B cell (primary cell): ENCODE measurements at regions of chr15 and their contacts with region 1.

Region 1: GRCh38 chr15:80058851-80059785 is at the start of gene ZFAND6:
- DNase-seq: peak; percentile 97
- ATAC-seq: peak; percentile 83
- H3K4me3 ChIP-seq: peak within 1 kb of the TSS; percentile 78 to 93 (median 85)
- H3K4me3 Mint-ChIP-seq: peak within 1 kb of the TSS; percentile 95
- H3K27ac ChIP-seq: peak within 1 kb of the TSS; percentile 87 to 96
- H3K27ac Mint-ChIP-seq: peak within 1 kb of the TSS; percentile 99
- H3K4me1 ChIP-seq: peaks cover 27 to 35% of the 10 kb centered on the region in 2 donors
- H3K4me1 Mint-ChIP-seq: peaks cover 52% of the 10 kb centered on the region
- H3K27me3 ChIP-seq: no peaks in the 10 kb centered on the region
- H3K27me3 Mint-ChIP-seq: no peaks in the 10 kb centered on the region
- CTCF ChIP-seq: peak; percentile 18
- total RNA-seq, gene ZFAND6: 133 and 144 TPM in 2 replicates

Region 2: DNA sequence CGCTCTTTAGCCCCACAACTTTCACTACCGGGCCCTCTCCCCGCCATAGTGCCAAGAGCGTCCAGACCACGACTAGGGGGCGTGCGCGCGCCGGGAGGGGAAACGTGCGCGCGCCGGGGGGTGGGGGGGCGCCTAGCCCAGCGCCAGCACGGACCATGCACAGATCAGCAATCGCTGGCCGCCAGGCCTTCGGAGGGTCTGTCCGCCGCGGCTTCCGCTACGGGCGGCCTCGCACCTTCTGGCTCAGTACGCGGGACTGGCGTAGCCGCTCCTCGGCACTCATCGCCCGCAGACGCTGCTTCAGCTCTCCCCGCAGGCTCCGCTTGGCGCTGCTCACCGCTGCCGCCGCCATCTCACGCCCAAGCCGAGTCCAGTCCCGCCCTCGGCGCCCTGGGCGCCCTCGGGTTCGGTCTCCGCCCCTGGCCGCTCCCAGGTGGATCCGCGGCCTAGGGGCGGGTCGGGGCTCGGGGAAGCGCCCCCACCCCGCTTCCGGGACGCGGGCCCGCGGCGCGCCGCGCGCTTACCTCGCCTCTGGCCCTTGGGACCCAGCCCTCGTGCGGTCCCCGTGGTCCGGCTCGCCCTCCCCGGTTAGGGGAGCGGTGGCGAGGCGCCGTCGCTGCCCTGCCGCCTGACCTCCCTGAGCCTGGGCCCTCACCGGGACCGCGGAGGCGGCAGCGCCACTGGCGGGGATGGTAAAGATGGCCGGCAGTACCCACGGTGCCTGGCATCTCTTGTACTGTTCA is 162.3 kb before region 1 on chr15 and contains the start of gene MTHFS:
- CTCF ChIA-PET with region 1: no interaction called
- POLR2A ChIA-PET with region 1: no interaction called
- intact Hi-C with region 1: loop called (anchors 1 kb)
- DNase-seq: peak; percentile 93
- ATAC-seq: peak; percentile 92
- H3K4me3 ChIP-seq: peak within 1 kb of the TSS; percentile 71 to 85 (median 79)
- H3K4me3 Mint-ChIP-seq: peak within 1 kb of the TSS; percentile 97
- H3K27ac ChIP-seq: peak within 1 kb of the TSS; percentile 90 to 98
- H3K27ac Mint-ChIP-seq: peak within 1 kb of the TSS; percentile 98
- H3K4me1 ChIP-seq: peaks cover 23 to 32% of the 10 kb centered on the region in 2 donors
- H3K4me1 Mint-ChIP-seq: peaks cover 40% of the 10 kb centered on the region
- H3K27me3 ChIP-seq: no peaks in the 10 kb centered on the region
- H3K27me3 Mint-ChIP-seq: no peaks in the 10 kb centered on the region
- CTCF ChIP-seq: peak; percentile 68
- total RNA-seq, gene MTHFS: 20.1 and 24.4 TPM in 2 replicates

Region 3: GRCh38 chr15:79970624-79971434 is 88.3 kb before region 1 on chr15 and contains the start of gene BCL2A1:
- CTCF ChIA-PET with region 1: interaction called, 4 read pairs
- POLR2A ChIA-PET with region 1: no interaction called
- intact Hi-C with region 1: loop called (anchors 2 kb)
- DNase-seq: peak; percentile 92
- ATAC-seq: peak; percentile 85
- H3K4me3 ChIP-seq: peak within 1 kb of the TSS; percentile 33 to 88 (median 57)
- H3K4me3 Mint-ChIP-seq: peak within 1 kb of the TSS; percentile 91
- H3K27ac ChIP-seq: peak within 1 kb of the TSS; percentile 75 to 79
- H3K27ac Mint-ChIP-seq: peak within 1 kb of the TSS; percentile 90
- H3K4me1 ChIP-seq: peaks cover 53 to 64% of the 10 kb centered on the region in 2 donors
- H3K4me1 Mint-ChIP-seq: peaks cover 60% of the 10 kb centered on the region
- H3K27me3 ChIP-seq: no peaks in the 10 kb centered on the region
- H3K27me3 Mint-ChIP-seq: no peaks in the 10 kb centered on the region
- CTCF ChIP-seq: no peak
- total RNA-seq, gene BCL2A1: 32.9 and 33.8 TPM in 2 replicates

Region 4: GRCh38 chr15:80070840-80071239 is 11.7 kb after region 1 on chr15:
- CTCF ChIA-PET with region 1: interaction called, 5 read pairs
- POLR2A ChIA-PET with region 1: no interaction called
- intact Hi-C with region 1: loop called (anchors 1 kb)
- DNase-seq: no peak
- ATAC-seq: no peak
- H3K4me3 ChIP-seq: no peak overlapping the region
- H3K4me3 Mint-ChIP-seq: peak overlapping the region; percentile 0
- H3K27ac ChIP-seq: no peak overlapping the region
- H3K27ac Mint-ChIP-seq: no peak overlapping the region
- H3K4me1 ChIP-seq: peaks cover 16 to 42% of the 10 kb centered on the region in 2 donors
- H3K4me1 Mint-ChIP-seq: peaks cover 67% of the 10 kb centered on the region
- H3K27me3 ChIP-seq: no peaks in the 10 kb centered on the region
- H3K27me3 Mint-ChIP-seq: no peaks in the 10 kb centered on the region
- CTCF ChIP-seq: no peak

Region 5: GRCh38 chr15:80081390-80081789 is 22.3 kb after region 1 on chr15:
- CTCF ChIA-PET with region 1: interaction called, 5 read pairs
- POLR2A ChIA-PET with region 1: no interaction called
- intact Hi-C with region 1: loop called (anchors 2 kb)
- DNase-seq: peak; percentile 58
- ATAC-seq: peak; percentile 89
- H3K4me3 ChIP-seq: no peak overlapping the region
- H3K4me3 Mint-ChIP-seq: no peak overlapping the region
- H3K27ac ChIP-seq: peak overlapping the region; percentile 26 to 57
- H3K27ac Mint-ChIP-seq: peak overlapping the region; percentile 3
- H3K4me1 ChIP-seq: peaks cover 9 to 13% of the 10 kb centered on the region in 2 donors
- H3K4me1 Mint-ChIP-seq: peaks cover 51% of the 10 kb centered on the region
- H3K27me3 ChIP-seq: no peaks in the 10 kb centered on the region
- H3K27me3 Mint-ChIP-seq: no peaks in the 10 kb centered on the region
- CTCF ChIP-seq: no peak

Region 6: DNA sequence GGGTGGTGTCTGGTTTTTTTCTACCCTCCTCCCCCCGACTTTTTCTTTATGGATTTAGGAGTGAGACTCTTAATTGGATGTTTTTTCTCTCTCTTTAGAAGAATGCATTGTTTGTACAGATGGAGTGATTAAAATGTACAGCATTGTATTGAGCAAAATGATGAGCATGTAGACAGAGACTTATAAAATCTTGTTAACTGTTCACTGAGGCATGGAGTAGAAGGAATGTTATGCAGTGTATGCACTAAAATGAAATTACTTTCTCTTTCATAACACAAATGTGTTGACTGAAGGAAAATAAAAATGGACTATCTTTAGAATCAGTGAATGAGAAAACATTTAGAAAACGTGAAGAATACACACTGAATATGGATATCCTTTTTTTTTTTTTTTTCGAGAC is 40.1 kb after region 1 on chr15:
- CTCF ChIA-PET with region 1: no interaction called
- POLR2A ChIA-PET with region 1: interaction called, 4 read pairs
- intact Hi-C with region 1: loop called (anchors 5 kb)
- DNase-seq: no peak
- ATAC-seq: peak; percentile 31
- H3K4me3 ChIP-seq: peak overlapping the region in 1 of 5 experiments; percentile 38
- H3K4me3 Mint-ChIP-seq: peak overlapping the region; percentile 67
- H3K27ac ChIP-seq: peak overlapping the region in 1 of 2 donors; percentile 44
- H3K27ac Mint-ChIP-seq: peak overlapping the region; percentile 60
- H3K4me1 ChIP-seq: peaks cover 8 to 18% of the 10 kb centered on the region in 2 donors
- H3K4me1 Mint-ChIP-seq: peaks cover 50% of the 10 kb centered on the region
- H3K27me3 ChIP-seq: no peaks in the 10 kb centered on the region
- H3K27me3 Mint-ChIP-seq: no peaks in the 10 kb centered on the region
- CTCF ChIP-seq: no peak

Region 7: DNA sequence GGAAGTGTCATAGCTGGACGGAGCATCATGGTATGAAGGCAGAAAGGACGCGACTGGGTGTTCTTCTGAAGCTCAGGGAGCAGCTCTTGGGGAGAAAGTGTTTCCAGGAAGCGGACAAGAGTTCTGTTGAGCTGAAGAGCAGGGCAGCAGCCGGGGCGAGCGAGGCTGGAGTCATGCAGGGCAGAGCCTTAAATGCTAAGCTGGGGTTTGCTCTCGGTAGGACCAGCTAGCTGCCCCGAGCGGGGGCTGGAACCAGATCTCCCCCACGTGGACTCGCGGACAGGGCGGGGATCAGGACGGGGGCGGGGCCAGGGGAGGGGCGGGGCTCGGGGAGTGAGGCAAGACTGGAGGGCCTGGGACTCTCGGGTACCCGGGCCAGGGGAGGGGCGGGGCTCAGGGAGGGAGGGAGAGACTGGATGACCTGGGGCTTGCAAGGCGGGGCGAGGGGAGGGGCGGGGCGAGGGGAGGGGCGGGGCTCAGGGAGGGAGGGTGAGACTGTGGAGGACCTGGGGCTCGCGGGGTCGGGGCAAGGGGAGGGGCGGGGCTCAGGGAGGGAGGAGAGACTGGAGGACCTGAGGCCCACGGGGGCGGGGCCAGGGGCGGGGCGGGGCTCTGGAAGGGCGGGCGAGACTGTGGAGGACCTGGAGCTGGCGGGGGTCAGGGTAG is 93.2 kb after region 1 on chr15:
- CTCF ChIA-PET with region 1: interaction called, 4 read pairs
- POLR2A ChIA-PET with region 1: interaction called, 10 read pairs
- intact Hi-C with region 1: loop called (anchors 1 kb)
- DNase-seq: peak; percentile 89
- ATAC-seq: peak; percentile 88
- H3K4me3 ChIP-seq: peak overlapping the region; percentile 6 to 89 (median 77)
- H3K4me3 Mint-ChIP-seq: peak overlapping the region; percentile 81
- H3K27ac ChIP-seq: peak overlapping the region in 1 of 2 donors; percentile 38
- H3K27ac Mint-ChIP-seq: peak overlapping the region; percentile 62
- H3K4me1 ChIP-seq: peaks cover 8 to 11% of the 10 kb centered on the region in 2 donors
- H3K4me1 Mint-ChIP-seq: peaks cover 21% of the 10 kb centered on the region
- H3K27me3 ChIP-seq: no peaks in the 10 kb centered on the region
- H3K27me3 Mint-ChIP-seq: no peaks in the 10 kb centered on the region
- CTCF ChIP-seq: no peak

Region 8: GRCh38 chr15:81685237-81685636 is 1626.1 kb after region 1 on chr15:
- CTCF ChIA-PET with region 1: no interaction called
- POLR2A ChIA-PET with region 1: no interaction called
- intact Hi-C with region 1: no loop called
- DNase-seq: no peak
- ATAC-seq: no peak
- H3K4me3 ChIP-seq: no peak overlapping the region
- H3K4me3 Mint-ChIP-seq: no peak overlapping the region
- H3K27ac ChIP-seq: no peak overlapping the region
- H3K27ac Mint-ChIP-seq: no peak overlapping the region
- H3K4me1 ChIP-seq: no peaks in the 10 kb centered on the region
- H3K4me1 Mint-ChIP-seq: no peaks in the 10 kb centered on the region
- H3K27me3 ChIP-seq: no peaks in the 10 kb centered on the region
- H3K27me3 Mint-ChIP-seq: no peaks in the 10 kb centered on the region
- CTCF ChIP-seq: no peak